ENCODE measurements at regions of chr19 and their contacts with region 1.

Region 1: GRCh38 chr19:47436712-47437401 is 17.5 kb upstream of the MEIS3 start:
- DNase-seq: peak; percentile 81 to 92
- ATAC-seq: peak; percentile 92 to 99 (median 98)
- H3K4me3 ChIP-seq: no peak overlapping the region
- H3K4me3 Mint-ChIP-seq: no peak overlapping the region
- H3K27ac ChIP-seq: no peak overlapping the region
- H3K27ac Mint-ChIP-seq: peak overlapping the region in 1 of 2 donors; percentile 15
- H3K4me1 ChIP-seq: peaks cover 4% of the 10 kb centered on the region
- H3K4me1 Mint-ChIP-seq: peaks cover 12 to 13% of the 10 kb centered on the region in 2 donors
- H3K27me3 ChIP-seq: peaks cover 3% of the 10 kb centered on the region
- H3K27me3 Mint-ChIP-seq: peaks cover 51 to 65% of the 10 kb centered on the region in 2 donors
- CTCF ChIP-seq: peak; percentile 82

Region 2: DNA sequence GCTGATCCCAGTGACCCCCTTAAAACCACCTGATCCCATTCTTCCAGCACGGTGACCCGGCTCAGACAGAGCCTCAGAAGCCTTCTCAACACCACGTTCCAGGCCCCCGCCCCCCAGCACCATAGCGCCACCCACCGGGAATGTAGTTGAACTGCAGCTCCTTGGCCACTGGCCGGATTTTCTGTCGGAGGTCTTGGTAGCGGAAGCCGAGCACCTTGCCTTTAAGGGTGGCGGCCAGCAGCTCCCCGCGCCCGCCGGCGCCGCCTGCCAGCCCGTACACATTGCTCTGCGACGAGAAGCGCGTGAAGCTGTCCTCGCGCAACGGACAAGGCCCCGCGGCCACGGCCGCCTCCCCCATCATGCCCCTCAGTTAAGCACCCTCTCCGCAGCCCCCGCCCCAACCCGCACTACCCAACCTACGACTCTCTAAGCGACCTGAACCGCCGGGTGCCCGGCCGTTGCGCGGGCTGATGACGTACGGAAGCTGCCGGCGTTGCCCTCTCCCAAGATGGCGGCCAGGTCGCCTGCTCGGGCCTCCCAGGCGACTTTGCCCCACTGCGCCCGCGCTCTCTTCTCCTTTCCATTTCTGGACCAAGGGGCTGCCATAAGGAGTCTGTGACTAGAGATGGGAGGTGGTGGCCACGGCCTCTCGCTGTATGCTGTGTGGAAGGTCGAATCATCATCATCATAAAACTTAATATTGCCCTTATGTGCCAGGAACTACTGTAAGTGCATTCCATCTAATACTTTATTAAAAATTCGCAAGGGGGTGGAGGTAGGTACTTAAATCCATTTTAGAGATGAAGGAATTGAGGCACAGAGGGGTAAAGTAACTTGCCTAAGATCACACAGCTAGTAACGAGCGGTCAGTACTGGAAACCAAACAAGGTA is 47.2 kb after region 1 on chr19 and contains the start of gene KPTN:
- intact Hi-C with region 1: no loop called
- DNase-seq: peak; percentile 88 to 93
- ATAC-seq: peak; percentile 81 to 92 (median 86)
- H3K4me3 ChIP-seq: peak within 1 kb of the TSS; percentile 65
- H3K4me3 Mint-ChIP-seq: peak within 1 kb of the TSS; percentile 95
- H3K27ac ChIP-seq: peak within 1 kb of the TSS; percentile 75
- H3K27ac Mint-ChIP-seq: peak within 1 kb of the TSS; percentile 93 to 97
- H3K4me1 ChIP-seq: peaks cover 35% of the 10 kb centered on the region
- H3K4me1 Mint-ChIP-seq: peaks cover 23 to 36% of the 10 kb centered on the region in 2 donors
- H3K27me3 ChIP-seq: no peaks in the 10 kb centered on the region
- H3K27me3 Mint-ChIP-seq: peaks cover 0 to 3% of the 10 kb centered on the region in 2 donors
- CTCF ChIP-seq: peak; percentile 82
- total RNA-seq, gene KPTN: 3.0 to 4.2 (median 3.6) TPM

Region 3: GRCh38 chr19:47540728-47541127 is 103.9 kb after region 1 on chr19:
- intact Hi-C with region 1: no loop called
- DNase-seq: peak in 1 of 2 donors; percentile 53
- ATAC-seq: no peak
- H3K4me3 ChIP-seq: no peak overlapping the region
- H3K4me3 Mint-ChIP-seq: peak overlapping the region; percentile 86
- H3K27ac ChIP-seq: peak overlapping the region; percentile 68
- H3K27ac Mint-ChIP-seq: peak overlapping the region; percentile 91 to 93
- H3K4me1 ChIP-seq: peaks cover 63% of the 10 kb centered on the region
- H3K4me1 Mint-ChIP-seq: peaks cover 39 to 40% of the 10 kb centered on the region in 2 donors
- H3K27me3 ChIP-seq: peaks cover 10% of the 10 kb centered on the region
- H3K27me3 Mint-ChIP-seq: peaks cover 0 to 5% of the 10 kb centered on the region in 2 donors
- CTCF ChIP-seq: no peak

Region 4: GRCh38 chr19:47697863-47698609 is 261.2 kb after region 1 on chr19:
- intact Hi-C with region 1: loop called (anchors 2 kb)
- DNase-seq: peak; percentile 43 to 76
- ATAC-seq: peak; percentile 63 to 86 (median 78)
- H3K4me3 ChIP-seq: no peak overlapping the region
- H3K4me3 Mint-ChIP-seq: no peak overlapping the region
- H3K27ac ChIP-seq: no peak overlapping the region
- H3K27ac Mint-ChIP-seq: no peak overlapping the region
- H3K4me1 ChIP-seq: no peaks in the 10 kb centered on the region
- H3K4me1 Mint-ChIP-seq: peaks cover 0 to 6% of the 10 kb centered on the region in 2 donors
- H3K27me3 ChIP-seq: no peaks in the 10 kb centered on the region
- H3K27me3 Mint-ChIP-seq: no peaks in the 10 kb centered on the region
- CTCF ChIP-seq: peak; percentile 74

Region 5: DNA sequence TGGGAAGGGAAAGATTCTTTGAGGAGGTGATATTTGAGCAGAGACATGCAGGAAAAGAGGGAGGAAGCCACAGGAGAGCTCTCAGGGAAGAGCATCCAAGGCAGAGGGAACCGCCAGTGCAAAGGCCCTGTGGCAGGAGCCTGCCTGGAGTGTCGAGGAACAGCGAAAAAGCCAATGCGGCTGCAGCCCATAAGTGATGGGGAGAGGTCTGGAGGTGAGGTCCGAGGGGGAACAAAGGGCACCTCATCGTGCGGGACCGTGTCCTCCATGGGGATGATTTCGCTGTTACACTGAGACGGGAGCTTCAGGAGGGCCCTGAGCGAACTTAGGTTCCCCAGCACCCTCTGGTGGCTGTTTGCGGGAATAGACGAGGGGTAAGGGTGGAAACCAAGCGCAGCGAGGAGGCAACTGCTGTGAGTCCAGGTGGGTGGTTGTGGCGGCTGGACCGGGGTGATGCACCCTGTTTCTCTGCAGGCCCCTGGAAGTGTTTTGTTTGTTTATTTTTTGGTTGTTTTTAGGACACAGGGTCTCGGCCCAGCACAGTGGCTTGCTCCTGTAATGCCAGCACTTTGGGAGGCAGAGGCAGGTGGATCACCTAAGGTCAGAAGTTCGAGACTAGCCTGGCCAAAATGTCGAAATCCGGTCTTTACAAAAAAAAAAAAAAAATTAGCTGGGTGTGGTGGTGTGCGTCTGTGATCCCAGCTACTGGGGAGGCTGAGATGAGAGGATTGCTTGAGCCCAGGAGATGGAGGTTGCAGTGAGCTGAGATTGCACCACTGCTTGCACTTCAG is 270.5 kb after region 1 on chr19:
- intact Hi-C with region 1: loop called (anchors 1 kb)
- DNase-seq: peak; percentile 66 to 86
- ATAC-seq: peak; percentile 82 to 99 (median 96)
- H3K4me3 ChIP-seq: no peak overlapping the region
- H3K4me3 Mint-ChIP-seq: no peak overlapping the region
- H3K27ac ChIP-seq: no peak overlapping the region
- H3K27ac Mint-ChIP-seq: no peak overlapping the region
- H3K4me1 ChIP-seq: peaks cover 5% of the 10 kb centered on the region
- H3K4me1 Mint-ChIP-seq: peaks cover 9% of the 10 kb centered on the region in 2 donors
- H3K27me3 ChIP-seq: peaks cover 5% of the 10 kb centered on the region
- H3K27me3 Mint-ChIP-seq: peaks cover 7 to 15% of the 10 kb centered on the region in 2 donors
- CTCF ChIP-seq: peak; percentile 83

Region 6: DNA sequence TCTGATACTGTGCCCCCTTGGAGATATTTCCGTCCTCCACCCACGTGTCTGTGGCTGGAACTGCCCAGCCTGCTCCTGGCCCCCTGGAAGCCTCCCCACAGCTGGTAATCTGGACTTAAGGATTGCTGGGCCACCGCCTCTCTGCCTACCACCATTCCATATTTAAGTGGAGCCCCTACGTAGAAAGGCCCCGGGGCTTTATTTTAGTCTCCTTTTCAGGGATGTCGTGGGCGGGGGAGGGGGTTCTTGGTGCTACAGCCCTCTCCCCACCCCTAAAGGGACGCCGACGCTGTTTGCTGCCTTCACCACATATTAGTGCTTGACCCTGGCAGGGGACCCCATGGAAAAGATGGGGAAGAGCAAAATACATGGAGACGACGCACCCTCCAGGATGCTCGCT is 305.8 kb after region 1 on chr19:
- intact Hi-C with region 1: loop called (anchors 1 kb)
- DNase-seq: no peak
- ATAC-seq: no peak
- H3K4me3 ChIP-seq: no peak overlapping the region
- H3K4me3 Mint-ChIP-seq: peak overlapping the region; percentile 35
- H3K27ac ChIP-seq: no peak overlapping the region
- H3K27ac Mint-ChIP-seq: no peak overlapping the region
- H3K4me1 ChIP-seq: peaks cover 32% of the 10 kb centered on the region
- H3K4me1 Mint-ChIP-seq: peaks cover 7 to 8% of the 10 kb centered on the region in 2 donors
- H3K27me3 ChIP-seq: no peaks in the 10 kb centered on the region
- H3K27me3 Mint-ChIP-seq: no peaks in the 10 kb centered on the region
- CTCF ChIP-seq: no peak

Measured in natural killer cell (primary cell).